ENCODE measurements at regions of chr20 and their contacts with region 1.

Region 1: GRCh38 chr20:42530822-42531448 is 658.8 kb downstream of the PTPRT start:
- DNase-seq: no peak

Region 2: GRCh38 chr20:41738604-41739206 is 792.2 kb before region 1 on chr20:
- intact Hi-C with region 1: loop called (anchors 10 kb)
- DNase-seq: peak; percentile 51 to 96 (median 72)

Region 3: DNA sequence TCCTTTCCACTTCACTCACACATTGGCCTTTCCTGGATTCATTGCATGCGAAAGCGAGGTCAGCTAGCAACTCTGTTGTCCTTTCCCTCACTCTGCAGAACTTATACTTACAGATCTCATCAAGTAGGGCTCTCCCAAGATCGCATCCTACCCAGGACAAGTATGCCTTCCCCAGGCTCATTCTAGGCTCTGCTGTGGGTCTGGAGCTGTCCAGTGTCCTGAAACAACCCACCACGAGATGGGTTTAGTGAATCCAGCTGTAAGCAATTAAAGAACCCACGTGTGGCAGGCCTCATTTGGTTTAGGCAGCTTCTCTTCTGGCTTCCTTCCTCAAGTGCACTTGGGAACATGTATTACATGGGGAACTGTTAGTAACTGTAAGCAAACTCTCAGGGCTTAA is 506.3 kb before region 1 on chr20:
- intact Hi-C with region 1: no loop called
- DNase-seq: no peak

Region 4: DNA sequence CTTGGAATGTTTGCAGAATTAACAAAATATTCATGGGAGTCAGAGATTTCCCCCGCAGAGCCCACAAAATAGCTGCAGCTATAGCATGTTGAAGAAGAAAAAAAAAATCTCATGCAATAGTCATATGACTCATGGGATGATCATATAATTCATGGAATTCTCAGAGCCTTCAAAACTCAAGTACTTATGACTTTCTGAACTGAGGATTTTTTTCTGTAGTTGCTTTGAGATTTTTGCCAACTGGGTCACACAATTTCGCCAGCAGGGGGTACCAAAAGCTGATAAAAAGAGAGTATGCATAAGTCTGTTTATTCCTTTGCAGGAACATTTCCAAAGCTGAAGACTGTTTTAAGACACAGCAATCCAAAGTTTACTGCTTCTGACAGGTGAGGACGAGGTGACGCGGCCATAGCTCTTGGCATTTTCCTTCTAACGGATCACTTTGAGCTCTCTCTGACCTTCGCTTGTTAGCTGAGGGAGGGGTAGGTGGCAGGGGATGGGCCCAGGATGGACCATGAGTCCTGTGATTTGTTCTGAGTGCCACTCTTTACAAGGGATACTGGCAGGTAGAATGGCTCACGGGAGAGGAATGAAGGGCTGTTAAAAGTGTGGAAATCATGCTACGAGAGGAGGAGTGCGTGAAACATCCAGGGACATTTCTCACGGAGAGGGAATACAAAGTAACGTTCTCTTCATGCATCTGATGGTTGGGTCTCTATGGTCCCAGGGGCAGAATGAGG is 326.6 kb before region 1 on chr20:
- intact Hi-C with region 1: loop called (anchors 2 kb)
- DNase-seq: peak in 5 of 10 donors; percentile 20 to 69 (median 41)

Region 5: DNA sequence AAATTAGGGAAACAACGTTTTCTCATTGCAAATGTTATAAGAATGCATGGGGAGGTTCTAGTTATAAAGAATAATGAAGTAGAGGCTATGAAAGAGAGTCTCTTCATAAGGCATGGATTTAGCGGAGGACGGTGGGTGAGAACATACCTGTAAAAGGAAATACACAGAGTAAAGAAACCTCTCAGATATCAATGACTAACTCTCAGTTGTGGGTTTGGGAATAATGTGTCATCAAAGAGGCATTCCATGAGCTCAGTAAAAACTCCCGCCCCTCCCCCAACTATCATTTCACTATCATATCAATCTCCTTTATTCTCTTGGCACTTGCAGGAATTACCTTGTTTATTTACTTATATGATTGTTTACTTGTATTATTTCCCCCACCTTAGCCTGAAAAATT is 36.6 kb before region 1 on chr20:
- intact Hi-C with region 1: no loop called
- DNase-seq: no peak

Measured in posterior cingulate gyrus (tissue), 11 donors.